Aorta (tissue), 5 donors: ENCODE measurements at regions of chr13 and their contacts with region 1.

Region 1: DNA sequence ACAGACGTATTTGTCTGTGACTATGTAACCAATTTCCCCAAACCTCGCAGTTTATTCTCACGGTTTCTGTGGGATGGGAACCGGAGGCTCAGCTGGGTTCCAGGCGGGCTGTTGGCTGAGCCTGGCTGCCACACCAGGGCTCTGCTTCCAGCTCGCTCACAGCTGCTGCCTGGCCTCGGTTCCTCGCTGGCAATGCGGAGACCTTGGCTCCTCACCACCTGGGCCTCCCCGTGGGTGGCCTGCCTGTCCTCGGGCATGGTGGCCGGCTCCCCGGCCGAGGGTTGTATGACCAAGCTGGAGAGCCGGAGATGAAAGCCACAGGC is 218.9 kb upstream of the MAB21L1 start:
- DNase-seq: no peak
- ATAC-seq: no peak
- H3K4me3 ChIP-seq: no peak overlapping the region
- H3K27ac ChIP-seq: no peak overlapping the region
- H3K4me1 ChIP-seq: no peaks in the 10 kb centered on the region
- H3K27me3 ChIP-seq: no peaks in the 10 kb centered on the region

Region 2: GRCh38 chr13:35475960-35476943 is 219.2 kb before region 1 on chr13 and contains the start of gene MAB21L1:
- intact Hi-C with region 1: no loop called
- DNase-seq: peak in 1 of 2 donors; percentile 75
- ATAC-seq: no peak
- H3K4me3 ChIP-seq: peak within 1 kb of the TSS in 1 of 2 donors; percentile 5
- H3K27ac ChIP-seq: peak within 1 kb of the TSS in 1 of 2 donors; percentile 0
- H3K4me1 ChIP-seq: no peaks in the 10 kb centered on the region
- H3K27me3 ChIP-seq: no peaks in the 10 kb centered on the region
- total RNA-seq, gene MAB21L1: 0.32 to 0.36 TPM

Region 3: DNA sequence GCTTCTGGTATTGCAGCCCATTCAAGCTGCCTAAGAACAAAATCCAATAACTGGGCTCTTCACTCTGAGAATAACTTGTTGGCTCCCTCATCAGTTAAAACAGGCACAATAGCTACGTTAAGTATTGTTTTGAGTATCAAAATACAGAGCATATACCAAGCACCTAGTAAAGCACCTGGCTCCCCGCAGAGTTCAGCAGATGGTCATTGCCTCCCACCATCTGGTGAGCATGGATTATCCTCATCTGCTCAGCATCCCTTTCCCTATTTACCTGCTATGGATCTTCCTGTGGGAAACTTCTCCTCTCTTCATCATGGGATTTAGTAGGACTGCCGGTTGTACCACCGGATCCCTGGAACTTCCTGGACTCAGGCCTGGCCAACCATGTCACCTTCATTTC is 19.8 kb before region 1 on chr13:
- intact Hi-C with region 1: loop called in 1 of 2 experiments (anchors 2 kb)
- DNase-seq: no peak
- ATAC-seq: no peak
- H3K4me3 ChIP-seq: no peak overlapping the region
- H3K27ac ChIP-seq: no peak overlapping the region
- H3K4me1 ChIP-seq: no peaks in the 10 kb centered on the region
- H3K27me3 ChIP-seq: no peaks in the 10 kb centered on the region